ENCODE measurements at regions of chr11 and their contacts with region 1.

Region 1: DNA sequence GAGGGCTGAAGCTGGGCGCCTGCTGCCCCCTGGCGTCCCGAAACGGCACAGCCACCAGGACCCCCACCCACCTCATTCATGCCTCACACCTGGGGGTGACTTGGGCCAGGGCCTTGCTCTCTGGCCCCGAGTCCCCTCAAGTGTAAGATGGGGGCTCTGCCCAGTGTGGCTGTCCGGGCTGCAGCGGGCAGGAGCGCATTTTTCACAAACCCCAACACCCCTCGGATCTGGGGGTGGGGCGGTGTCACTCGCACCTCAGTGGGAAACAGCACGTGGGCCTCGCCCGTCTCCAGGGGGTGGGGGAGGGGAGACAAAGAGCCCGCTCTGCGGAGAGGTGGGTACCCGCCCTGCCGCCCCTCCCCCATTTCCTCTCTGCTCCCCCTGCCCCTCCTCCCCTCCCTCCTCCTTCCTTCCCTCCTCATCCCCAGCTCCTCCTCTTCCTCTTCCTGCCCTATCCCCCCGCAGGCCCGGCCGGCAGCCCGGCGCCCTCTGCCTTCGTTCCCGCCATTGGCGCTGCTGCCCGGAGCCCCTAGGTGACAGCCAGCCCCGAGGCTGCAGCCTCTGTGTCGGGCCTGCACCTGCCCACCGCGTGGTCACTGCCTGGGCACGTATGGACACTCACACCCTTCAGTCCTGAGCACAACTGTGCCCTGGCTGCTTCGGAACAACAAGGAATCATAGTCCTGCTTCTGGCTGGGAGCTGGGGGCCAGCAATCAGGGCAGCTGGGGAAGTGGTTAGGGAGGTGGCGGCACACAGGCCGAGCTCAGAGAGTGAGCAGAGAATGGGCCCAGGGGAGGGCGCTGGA is 6.8 kb upstream of the CDKN1C start:
- DNase-seq: peak; percentile 90
- H3K4me3 Mint-ChIP-seq: peak overlapping the region; percentile 90
- H3K27ac Mint-ChIP-seq: peak overlapping the region; percentile 80
- H3K4me1 Mint-ChIP-seq: peaks cover 12% of the 10 kb centered on the region
- H3K27me3 Mint-ChIP-seq: peaks cover under 1% of the 10 kb centered on the region

Region 2: GRCh38 chr11:2428322-2428795 is 464.1 kb before region 1 on chr11:
- intact Hi-C with region 1: loop called (anchors 1 kb)
- DNase-seq: peak; percentile 95
- H3K4me3 Mint-ChIP-seq: no peak overlapping the region
- H3K27ac Mint-ChIP-seq: no peak overlapping the region
- H3K4me1 Mint-ChIP-seq: no peaks in the 10 kb centered on the region
- H3K27me3 Mint-ChIP-seq: no peaks in the 10 kb centered on the region